Gastrocnemius medialis (tissue), 4 donors: ENCODE measurements at regions of chr16 and their contacts with region 1.

Region 1: GRCh38 chr16:55171241-55171640 is 152.8 kb upstream of the IRX6 start:
- DNase-seq: no peak
- ATAC-seq: no peak
- H3K4me3 ChIP-seq: no peak overlapping the region
- H3K27ac ChIP-seq: no peak overlapping the region
- H3K4me1 ChIP-seq: no peaks in the 10 kb centered on the region
- H3K27me3 ChIP-seq: no peaks in the 10 kb centered on the region
- CTCF ChIP-seq: no peak
- POLR2A ChIP-seq: no peak

Region 2: GRCh38 chr16:55056585-55057401 is 114.4 kb before region 1 on chr16:
- in situ Hi-C with region 1: loop called in 1 of 4 experiments (anchors 25 kb)
- intact Hi-C with region 1: no loop called
- DNase-seq: no peak
- ATAC-seq: no peak
- H3K4me3 ChIP-seq: peak overlapping the region; percentile 32 to 56 (median 38)
- H3K27ac ChIP-seq: no peak overlapping the region
- H3K4me1 ChIP-seq: no peaks in the 10 kb centered on the region
- H3K27me3 ChIP-seq: peaks cover 9 to 32% (median 14%) of the 10 kb centered on the region in 3 donors
- CTCF ChIP-seq: no peak
- POLR2A ChIP-seq: no peak

Region 3: DNA sequence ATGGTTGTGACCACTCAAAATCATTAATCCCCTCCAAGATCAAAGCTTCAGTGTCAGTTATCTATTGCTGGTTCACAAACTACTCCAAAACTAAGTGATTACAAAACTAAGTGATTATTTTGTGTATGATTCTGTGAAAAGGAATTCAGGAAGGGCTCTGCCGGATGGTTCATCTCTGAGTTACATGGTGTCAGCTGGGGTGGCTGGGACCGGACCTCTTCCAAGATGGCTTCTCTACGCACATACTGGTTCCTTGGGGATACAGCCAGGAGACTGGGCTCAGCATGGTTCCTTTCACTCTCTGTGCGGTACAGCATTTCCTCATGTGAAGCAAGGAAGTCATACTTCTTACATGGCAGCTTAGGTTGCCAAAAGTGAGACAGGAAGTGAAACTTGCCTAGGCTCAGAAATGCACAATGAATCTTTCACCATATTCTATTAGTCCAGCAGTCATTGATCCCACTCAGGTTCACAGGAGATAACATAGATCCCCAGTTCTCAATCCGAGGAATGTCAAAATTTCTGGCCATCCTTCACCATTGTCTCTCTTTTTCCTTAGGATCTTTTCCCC is 54.8 kb after region 1 on chr16:
- in situ Hi-C with region 1: loop called in 1 of 4 experiments (anchors 10 kb)
- intact Hi-C with region 1: no loop called
- DNase-seq: no peak
- ATAC-seq: no peak
- H3K4me3 ChIP-seq: no peak overlapping the region
- H3K27ac ChIP-seq: no peak overlapping the region
- H3K4me1 ChIP-seq: no peaks in the 10 kb centered on the region
- H3K27me3 ChIP-seq: no peaks in the 10 kb centered on the region
- CTCF ChIP-seq: no peak
- POLR2A ChIP-seq: no peak